A549 (cell line): ENCODE measurements at regions of chr14 and their contacts with region 1.

Region 1: GRCh38 chr14:55354500-55354899 is 57.1 kb downstream of the ATG14 start:
- DNase-seq: peak; percentile 44 to 53
- ATAC-seq: peak; percentile 81 to 89; a peak in 5 of 6 replicates
- H3K4me3 ChIP-seq: no peak overlapping the region
- H3K27ac ChIP-seq: no peak overlapping the region
- H3K4me1 ChIP-seq: no peaks in the 10 kb centered on the region
- CTCF ChIP-seq: peak; percentile 59
- EP300 ChIP-seq: no peak
- POLR2A ChIP-seq: no peak
- RAD21 ChIP-seq: peak; percentile 66 to 74

Region 2: GRCh38 chr14:55212634-55213033 is 141.9 kb before region 1 on chr14:
- CTCF ChIA-PET with region 1: interaction called, 10 read pairs
- POLR2A ChIA-PET with region 1: no interaction called
- DNase-seq: no peak
- ATAC-seq: peak in 1 of 2 experiments; percentile 32; a peak in 3 of 6 replicates
- H3K4me3 ChIP-seq: no peak overlapping the region
- H3K27ac ChIP-seq: no peak overlapping the region
- H3K4me1 ChIP-seq: no peaks in the 10 kb centered on the region
- CTCF ChIP-seq: no peak
- EP300 ChIP-seq: no peak
- POLR2A ChIP-seq: no peak
- RAD21 ChIP-seq: no peak

Region 3: DNA sequence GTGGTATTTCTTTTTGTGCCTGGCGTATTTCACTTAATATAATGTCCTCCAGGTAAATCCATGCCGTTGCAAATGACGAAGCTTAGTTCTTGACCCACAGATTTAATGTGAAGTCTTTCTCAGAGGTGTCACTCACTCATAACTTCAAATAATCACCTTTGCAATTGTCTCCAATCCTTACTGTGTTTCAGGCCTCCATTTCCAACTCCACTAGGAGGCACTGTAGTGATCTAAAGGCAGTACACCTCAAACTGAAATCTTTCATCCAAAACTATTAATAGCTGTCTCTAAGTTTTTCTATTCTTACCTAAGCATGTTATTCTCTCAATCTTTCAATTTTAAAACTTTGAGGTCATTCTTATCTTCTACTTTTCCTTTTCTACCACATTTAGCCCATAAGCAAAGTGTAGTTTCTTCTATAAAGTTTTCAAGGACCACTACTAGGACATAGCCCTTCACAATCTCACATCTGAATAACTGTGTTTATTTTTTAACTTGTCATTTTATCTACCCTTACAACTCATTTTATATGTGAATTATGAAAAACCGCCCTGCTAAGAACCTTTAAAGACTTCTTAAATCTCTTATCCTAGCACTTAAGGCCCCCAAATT is 108.7 kb before region 1 on chr14:
- CTCF ChIA-PET with region 1: interaction called, 13 read pairs
- POLR2A ChIA-PET with region 1: no interaction called
- DNase-seq: peak in 1 of 2 experiments; percentile 33
- ATAC-seq: peak in 1 of 2 experiments; percentile 79; a peak in 3 of 6 replicates
- H3K4me3 ChIP-seq: no peak overlapping the region
- H3K27ac ChIP-seq: no peak overlapping the region
- H3K4me1 ChIP-seq: no peaks in the 10 kb centered on the region
- CTCF ChIP-seq: peak; percentile 59
- EP300 ChIP-seq: no peak
- POLR2A ChIP-seq: no peak
- RAD21 ChIP-seq: peak; percentile 32 to 37; a peak in 3 of 5 replicates

Region 4: GRCh38 chr14:55366271-55366670 is 11.8 kb after region 1 on chr14:
- CTCF ChIA-PET with region 1: interaction called, 14 read pairs
- POLR2A ChIA-PET with region 1: no interaction called
- DNase-seq: no peak
- ATAC-seq: peak in 1 of 2 experiments; percentile 42; a peak in 1 of 6 replicates
- H3K4me3 ChIP-seq: no peak overlapping the region
- H3K27ac ChIP-seq: no peak overlapping the region
- H3K4me1 ChIP-seq: peaks cover 12% of the 10 kb centered on the region; the same call in 1 of the 3 replicates
- CTCF ChIP-seq: no peak
- EP300 ChIP-seq: no peak
- POLR2A ChIP-seq: no peak
- RAD21 ChIP-seq: no peak

Region 5: DNA sequence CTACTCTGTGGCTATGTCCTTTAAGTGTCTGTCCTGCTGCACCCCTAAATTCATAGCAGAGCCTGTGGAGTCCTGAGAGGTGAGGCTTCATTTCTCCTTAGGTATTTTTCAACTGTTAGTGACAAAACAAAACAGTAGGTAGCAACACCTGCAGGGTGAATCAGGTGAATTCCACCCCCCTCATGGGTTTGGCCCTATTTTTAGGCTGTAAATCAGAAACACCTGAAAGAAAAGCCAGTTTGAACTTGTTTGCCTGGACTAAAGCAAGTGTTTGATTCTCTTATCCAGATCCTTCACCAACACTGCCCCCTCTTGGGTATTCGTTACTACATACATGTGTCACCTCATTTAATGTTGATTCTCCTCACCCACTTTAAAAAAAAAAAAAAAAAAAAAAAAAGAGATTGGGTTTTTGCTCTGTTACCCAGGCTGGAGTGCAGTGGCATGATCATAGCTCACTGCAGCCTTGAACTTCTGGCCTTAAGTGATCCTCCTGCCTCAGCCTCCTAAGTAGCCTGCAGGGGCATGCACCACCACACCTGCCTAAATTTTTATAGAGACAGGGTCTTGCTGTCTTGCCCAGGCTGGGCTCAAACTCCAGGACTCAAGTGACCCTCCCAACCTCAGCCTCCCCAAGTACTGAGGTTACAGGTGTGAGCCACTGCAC is 75.7 kb after region 1 on chr14:
- CTCF ChIA-PET with region 1: no interaction called
- POLR2A ChIA-PET with region 1: no interaction called
- DNase-seq: peak; percentile 64 to 79
- ATAC-seq: peak; percentile 81 to 91; a peak in 5 of 6 replicates
- H3K4me3 ChIP-seq: no peak overlapping the region
- H3K27ac ChIP-seq: no peak overlapping the region
- H3K4me1 ChIP-seq: no peaks in the 10 kb centered on the region
- CTCF ChIP-seq: peak; percentile 57
- EP300 ChIP-seq: no peak
- POLR2A ChIP-seq: no peak
- RAD21 ChIP-seq: peak; percentile 61 to 62